Posterior cingulate gyrus (tissue), 11 donors: ENCODE measurements at regions of chr9 and their contacts with region 1.

Region 1: DNA sequence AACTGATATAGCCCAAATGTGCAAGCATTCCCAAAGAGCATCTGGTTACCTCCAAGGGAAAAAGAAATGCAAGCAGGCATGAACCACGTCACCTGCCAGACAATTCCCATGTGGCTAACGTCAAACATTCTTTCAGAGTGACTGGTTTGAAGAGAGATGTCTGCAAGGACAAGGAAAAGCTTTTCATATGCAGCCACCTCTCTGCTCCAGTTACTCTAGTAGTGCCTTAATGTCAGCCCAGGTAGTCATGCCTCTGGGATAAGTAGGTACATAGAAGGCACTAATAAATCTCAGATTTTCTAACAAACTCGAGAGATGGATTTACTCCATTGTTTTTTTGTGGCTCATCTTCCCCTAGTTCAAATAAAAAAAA is 96.8 kb upstream of the IFNK start:
- DNase-seq: no peak

Region 2: DNA sequence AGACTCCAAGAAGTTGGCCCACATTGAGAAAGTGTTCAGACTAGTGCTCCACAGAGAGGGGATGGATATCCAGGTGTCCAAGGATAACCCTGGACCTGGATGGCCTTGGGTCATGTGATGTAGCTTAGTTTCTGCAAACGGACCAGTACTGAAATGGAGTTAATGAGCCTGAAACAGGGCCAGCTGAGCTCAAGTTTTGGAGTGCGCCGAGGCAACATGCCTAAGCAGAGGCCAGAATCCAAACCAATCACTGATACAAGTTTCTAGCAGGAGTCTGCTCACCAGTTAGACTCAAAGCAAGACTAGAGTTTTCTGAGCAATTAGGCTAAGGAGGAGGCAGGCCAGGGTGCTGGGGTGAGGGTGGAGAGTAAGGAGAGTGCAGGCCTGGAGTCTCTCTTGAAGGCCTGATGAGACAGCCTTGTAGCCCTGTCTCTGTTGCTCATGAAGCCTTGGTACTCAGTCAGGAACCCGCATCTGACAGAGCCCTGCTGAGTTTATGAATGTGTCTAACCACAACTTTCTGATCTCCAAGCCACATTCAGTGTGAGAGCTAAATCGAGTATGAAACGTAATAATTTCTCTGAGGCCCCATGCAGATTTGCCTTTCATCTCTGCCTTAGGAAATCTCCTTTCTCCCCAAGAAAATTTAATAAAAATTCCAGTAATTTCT is 61.4 kb before region 1 on chr9:
- intact Hi-C with region 1: loop called (anchors 5 kb)
- DNase-seq: no peak

Region 3: GRCh38 chr9:27499481-27499880 is 72.2 kb after region 1 on chr9:
- intact Hi-C with region 1: no loop called
- DNase-seq: no peak